CD8-positive, alpha-beta T cell (primary cell): ENCODE measurements at regions of chr1 and their contacts with region 1.

Region 1: DNA sequence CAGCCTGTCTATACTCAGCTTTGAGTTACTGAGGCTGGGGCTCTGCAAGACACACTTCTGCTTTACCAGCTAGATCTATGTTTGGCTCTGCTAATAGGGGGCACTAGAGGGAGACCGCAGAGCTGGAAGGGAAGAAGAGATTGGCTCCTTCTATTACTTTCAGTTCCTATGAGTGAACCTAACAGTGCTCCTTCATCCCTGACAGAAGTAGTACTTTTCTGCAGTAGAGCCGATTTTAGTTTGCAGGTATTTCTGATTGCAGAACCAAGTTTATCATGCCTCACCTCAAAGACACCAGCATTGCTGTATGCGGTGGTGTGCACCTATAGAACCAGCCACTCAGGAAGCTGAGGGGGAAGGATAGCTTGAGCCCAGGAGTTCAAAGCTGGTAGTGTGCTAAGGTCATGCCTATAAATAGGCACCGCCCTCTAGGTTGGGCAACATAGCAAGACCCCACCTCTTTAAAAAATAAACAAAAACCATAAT is 5.7 kb upstream of the ZDHHC18 start:
- DNase-seq: peak in 6 of 9 experiments; percentile 11 to 81 (median 53)
- ATAC-seq: peak; percentile 97
- H3K4me3 ChIP-seq: peak overlapping the region; percentile 23 to 25
- H3K4me3 Mint-ChIP-seq: peak overlapping the region; percentile 82
- H3K27ac ChIP-seq: peak overlapping the region in 1 of 2 experiments; percentile 60
- H3K27ac Mint-ChIP-seq: peak overlapping the region; percentile 89
- H3K4me1 ChIP-seq: peaks cover 21% of the 10 kb centered on the region
- H3K4me1 Mint-ChIP-seq: peaks cover 27% of the 10 kb centered on the region
- H3K27me3 ChIP-seq: no peaks in the 10 kb centered on the region
- H3K27me3 Mint-ChIP-seq: no peaks in the 10 kb centered on the region
- CTCF ChIP-seq: peak; percentile 57

Region 2: GRCh38 chr1:26799479-26800142 is 21.2 kb before region 1 on chr1:
- CTCF ChIA-PET with region 1: interaction called, 14 read pairs
- POLR2A ChIA-PET with region 1: interaction called, 4 read pairs
- intact Hi-C with region 1: no loop called
- DNase-seq: peak in 5 of 9 experiments; percentile 20 to 63 (median 39)
- ATAC-seq: peak; percentile 69
- H3K4me3 ChIP-seq: no peak overlapping the region
- H3K4me3 Mint-ChIP-seq: peak overlapping the region; percentile 73
- H3K27ac ChIP-seq: peak overlapping the region; percentile 26 to 87
- H3K27ac Mint-ChIP-seq: peak overlapping the region; percentile 97
- H3K4me1 ChIP-seq: peaks cover 39% of the 10 kb centered on the region
- H3K4me1 Mint-ChIP-seq: peaks cover 36% of the 10 kb centered on the region
- H3K27me3 ChIP-seq: no peaks in the 10 kb centered on the region
- H3K27me3 Mint-ChIP-seq: no peaks in the 10 kb centered on the region
- CTCF ChIP-seq: no peak

Region 3: DNA sequence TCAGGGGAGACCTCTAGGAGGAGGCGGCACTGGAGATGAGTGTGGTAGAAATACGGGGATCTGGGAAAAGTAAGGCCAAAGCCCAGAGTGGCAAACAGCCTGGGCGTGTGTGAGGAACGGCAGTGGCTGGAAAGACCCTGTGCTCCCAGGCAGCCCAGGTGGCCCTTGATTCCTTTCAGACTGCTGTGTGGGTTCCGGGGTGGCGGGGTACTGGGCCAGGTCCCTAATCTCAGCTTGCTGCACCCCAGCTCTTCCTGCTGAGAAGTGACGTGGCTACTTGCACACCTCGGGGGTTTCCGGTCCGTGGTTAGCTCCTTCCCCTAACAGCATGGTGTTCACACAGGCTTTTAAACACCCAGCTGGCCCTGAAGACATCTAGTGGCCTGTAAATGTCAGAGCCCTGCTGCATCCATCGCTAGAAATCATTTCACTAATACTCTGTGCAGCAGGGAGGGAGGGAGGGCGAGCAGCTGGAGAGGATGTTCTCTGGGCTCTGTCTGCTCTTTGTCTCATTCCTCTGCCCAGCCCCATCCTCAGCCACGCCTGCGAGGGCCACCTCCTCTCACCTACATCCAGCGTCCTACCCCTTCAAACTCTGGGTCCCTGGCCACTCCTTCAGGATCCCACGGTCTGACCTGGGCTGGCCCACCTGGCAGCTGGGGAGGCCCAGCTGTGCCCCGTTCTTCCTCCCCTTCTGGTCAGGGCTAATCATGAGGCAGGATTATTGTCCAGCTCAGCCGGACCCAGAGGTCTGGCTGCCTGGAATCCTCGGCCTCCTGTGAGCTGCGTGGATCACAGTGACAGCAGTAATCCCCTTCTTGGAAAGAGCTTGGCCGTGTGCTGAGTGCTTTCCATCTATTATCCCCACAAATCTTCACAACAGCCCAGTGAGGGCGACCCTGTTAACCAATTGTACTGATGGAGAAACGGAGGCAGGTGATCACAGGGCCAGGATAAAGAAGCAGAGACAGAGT is 12.9 kb after region 1 on chr1:
- CTCF ChIA-PET with region 1: interaction called, 42 read pairs
- POLR2A ChIA-PET with region 1: interaction called, 11 read pairs
- intact Hi-C with region 1: loop called in 1 of 2 experiments (anchors 1 kb)
- DNase-seq: peak; percentile 74 to 99 (median 89)
- ATAC-seq: peak; percentile 94
- H3K4me3 ChIP-seq: peak overlapping the region; percentile 27 to 31
- H3K4me3 Mint-ChIP-seq: peak overlapping the region; percentile 73
- H3K27ac ChIP-seq: peak overlapping the region; percentile 88 to 98
- H3K27ac Mint-ChIP-seq: peak overlapping the region; percentile 100
- H3K4me1 ChIP-seq: peaks cover 51% of the 10 kb centered on the region
- H3K4me1 Mint-ChIP-seq: peaks cover 74% of the 10 kb centered on the region
- H3K27me3 ChIP-seq: no peaks in the 10 kb centered on the region
- H3K27me3 Mint-ChIP-seq: no peaks in the 10 kb centered on the region
- CTCF ChIP-seq: peak; percentile 53

Region 4: GRCh38 chr1:27234049-27234882 is 413.4 kb after region 1 on chr1 and contains the start of gene WDTC1:
- CTCF ChIA-PET with region 1: no interaction called
- POLR2A ChIA-PET with region 1: no interaction called
- intact Hi-C with region 1: no loop called
- DNase-seq: peak; percentile 97 to 99 (median 98)
- ATAC-seq: peak; percentile 90
- H3K4me3 ChIP-seq: peak within 1 kb of the TSS; percentile 58 to 66
- H3K4me3 Mint-ChIP-seq: peak within 1 kb of the TSS; percentile 99
- H3K27ac ChIP-seq: peak within 1 kb of the TSS; percentile 74 to 93
- H3K27ac Mint-ChIP-seq: peak within 1 kb of the TSS; percentile 95
- H3K4me1 ChIP-seq: peaks cover 25% of the 10 kb centered on the region
- H3K4me1 Mint-ChIP-seq: peaks cover 37% of the 10 kb centered on the region
- H3K27me3 ChIP-seq: no peaks in the 10 kb centered on the region
- H3K27me3 Mint-ChIP-seq: no peaks in the 10 kb centered on the region
- CTCF ChIP-seq: no peak
- total RNA-seq, gene WDTC1: 17.8 to 18.1 TPM